ENCODE measurements at regions of chr4 and their contacts with region 1.

Region 1: GRCh38 chr4:7802093-7802726 is 137.5 kb downstream of the AFAP1 start:
- DNase-seq: peak; percentile 93

Region 2: GRCh38 chr4:6379767-6380745 is 1422.2 kb before region 1 on chr4:
- intact Hi-C with region 1: no loop called
- DNase-seq: peak; percentile 64

Region 3: GRCh38 chr4:7761720-7762119 is 40.5 kb before region 1 on chr4:
- intact Hi-C with region 1: loop called in 1 of 2 experiments (anchors 5 kb)
- DNase-seq: peak; percentile 91

Region 4: GRCh38 chr4:7785017-7785416 is 17.2 kb before region 1 on chr4:
- intact Hi-C with region 1: no loop called
- DNase-seq: peak; percentile 58

Region 5: GRCh38 chr4:7987148-7987989 is 185.2 kb after region 1 on chr4:
- intact Hi-C with region 1: loop called (anchors 2 to 10 kb)
- DNase-seq: no peak

Region 6: GRCh38 chr4:8182858-8183725 is 380.9 kb after region 1 on chr4:
- intact Hi-C with region 1: no loop called
- DNase-seq: peak; percentile 94

Region 7: DNA sequence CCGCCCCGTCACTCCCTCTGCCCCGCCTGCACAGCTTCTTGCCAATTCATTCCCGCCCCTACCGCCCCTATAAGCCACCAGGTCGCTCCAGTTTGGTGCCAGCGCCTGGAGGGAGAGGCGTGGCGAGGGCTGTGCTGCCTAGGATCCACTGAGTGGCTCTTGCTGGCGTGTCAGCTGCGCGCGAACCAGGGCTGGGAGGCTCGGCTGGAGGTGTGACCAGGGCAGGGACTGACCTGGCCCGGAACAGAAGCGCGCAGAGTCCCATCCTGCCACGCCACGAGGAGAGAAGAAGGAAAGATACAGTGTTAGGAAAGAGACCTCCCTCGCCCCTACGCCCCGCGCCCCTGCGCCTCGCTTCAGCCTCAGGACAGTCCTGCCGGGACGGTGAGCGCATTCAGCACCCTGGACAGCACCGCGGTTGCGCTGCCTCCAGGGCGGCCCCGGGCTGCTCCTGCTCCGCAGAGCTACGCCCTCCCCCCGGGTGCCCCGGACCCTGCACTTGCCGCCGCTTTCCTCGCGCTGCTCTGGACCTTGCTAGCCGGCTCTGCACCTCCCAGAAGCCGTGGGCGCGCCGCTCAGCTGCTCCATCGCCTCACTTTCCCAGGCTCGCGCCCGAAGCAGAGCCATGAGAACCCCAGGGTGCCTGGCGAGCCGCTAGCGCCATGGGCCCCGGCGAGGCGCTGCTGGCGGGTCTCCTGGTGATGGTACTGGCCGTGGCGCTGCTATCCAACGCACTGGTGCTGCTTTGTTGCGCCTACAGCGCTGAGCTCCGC is 778.3 kb after region 1 on chr4 and contains the start of gene GPR78:
- intact Hi-C with region 1: loop called in 1 of 2 experiments (anchors 5 kb)
- DNase-seq: peak; percentile 87
- total RNA-seq, gene GPR78: 0.09 to 0.10 TPM

Measured in posterior vena cava (tissue), 2 donors.